Ascending aorta (tissue), 2 donors: ENCODE measurements at regions of chr9 and their contacts with region 1.

Region 1: GRCh38 chr9:28207657-28208056 is 634.4 kb upstream of the C9orf72 start:
- DNase-seq: no peak
- H3K4me3 ChIP-seq: no peak overlapping the region
- H3K27ac ChIP-seq: no peak overlapping the region
- H3K4me1 ChIP-seq: no peaks in the 10 kb centered on the region
- H3K27me3 ChIP-seq: no peaks in the 10 kb centered on the region
- CTCF ChIP-seq: no peak

Region 2: DNA sequence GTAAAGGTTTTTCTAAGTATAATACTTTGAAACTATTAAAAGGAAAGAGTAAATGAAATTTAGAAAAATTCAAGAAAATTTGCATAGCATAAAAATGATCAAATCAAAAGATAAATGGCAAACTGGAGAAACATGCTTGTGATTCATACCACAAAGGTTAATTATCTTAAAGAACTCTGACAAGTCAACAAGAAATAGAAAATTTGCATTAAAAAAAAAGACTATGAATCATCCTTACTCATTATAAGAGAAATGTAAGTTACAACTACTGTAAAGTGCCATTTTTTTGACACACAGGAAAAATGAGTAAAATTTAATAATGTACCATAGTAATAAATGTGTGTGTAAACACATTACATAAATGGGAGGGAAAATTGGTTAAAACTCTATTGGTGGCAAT is 10.0 kb before region 1 on chr9:
- intact Hi-C with region 1: loop called (anchors 1 kb)
- DNase-seq: no peak
- H3K4me3 ChIP-seq: no peak overlapping the region
- H3K27ac ChIP-seq: no peak overlapping the region
- H3K4me1 ChIP-seq: no peaks in the 10 kb centered on the region
- H3K27me3 ChIP-seq: no peaks in the 10 kb centered on the region
- CTCF ChIP-seq: no peak

Region 3: DNA sequence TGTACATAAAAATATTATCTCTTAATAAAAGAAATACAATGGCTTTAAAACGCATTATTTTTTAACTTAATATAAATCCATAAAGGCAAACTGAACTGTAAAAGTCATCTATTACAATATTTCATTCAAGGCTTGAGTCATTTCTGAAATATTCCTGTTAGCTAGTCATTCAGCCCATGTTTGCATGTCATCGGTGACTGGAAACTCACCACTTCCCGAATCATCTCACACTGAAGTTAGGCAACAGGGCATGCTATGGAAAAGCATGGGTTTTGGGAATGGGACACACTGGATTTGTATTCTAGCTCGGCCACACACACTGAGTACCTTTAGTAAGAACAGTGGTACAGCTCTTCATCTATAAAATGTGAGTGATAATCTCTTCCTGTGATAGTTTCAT is 56.7 kb after region 1 on chr9:
- intact Hi-C with region 1: no loop called
- DNase-seq: no peak
- H3K4me3 ChIP-seq: no peak overlapping the region
- H3K27ac ChIP-seq: no peak overlapping the region
- H3K4me1 ChIP-seq: no peaks in the 10 kb centered on the region
- H3K27me3 ChIP-seq: no peaks in the 10 kb centered on the region
- CTCF ChIP-seq: no peak